Mammary epithelial cell (primary cell): ENCODE measurements at regions of chrX and their contacts with region 1.

Region 1: DNA sequence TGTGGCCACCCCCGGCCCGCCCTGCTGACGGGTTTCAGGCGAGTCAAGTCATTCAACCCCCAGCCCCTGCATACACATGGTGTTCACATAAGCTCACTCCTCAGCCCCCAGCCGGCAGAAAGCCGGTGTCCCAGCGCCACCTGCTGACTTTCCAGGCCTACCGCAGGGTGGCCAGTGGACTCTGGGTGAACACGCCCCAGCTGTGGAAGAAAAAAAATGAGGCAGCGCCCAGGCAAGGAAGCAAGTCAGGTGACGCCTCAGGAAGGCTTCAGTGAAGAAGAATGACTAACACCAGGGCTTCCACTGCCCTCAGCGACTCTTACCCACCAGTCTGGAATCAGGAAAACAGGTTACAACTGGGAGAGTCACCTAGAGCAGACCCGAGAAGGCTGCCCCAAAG is 15.8 kb downstream of the BCAP31 start:
- DNase-seq: peak; percentile 89
- H3K4me3 ChIP-seq: no peak overlapping the region
- H3K27ac ChIP-seq: no peak overlapping the region
- H3K4me1 ChIP-seq: peaks cover 29% of the 10 kb centered on the region
- H3K27me3 ChIP-seq: no peaks in the 10 kb centered on the region
- CTCF ChIP-seq: peak; percentile 45 to 73

Region 2: DNA sequence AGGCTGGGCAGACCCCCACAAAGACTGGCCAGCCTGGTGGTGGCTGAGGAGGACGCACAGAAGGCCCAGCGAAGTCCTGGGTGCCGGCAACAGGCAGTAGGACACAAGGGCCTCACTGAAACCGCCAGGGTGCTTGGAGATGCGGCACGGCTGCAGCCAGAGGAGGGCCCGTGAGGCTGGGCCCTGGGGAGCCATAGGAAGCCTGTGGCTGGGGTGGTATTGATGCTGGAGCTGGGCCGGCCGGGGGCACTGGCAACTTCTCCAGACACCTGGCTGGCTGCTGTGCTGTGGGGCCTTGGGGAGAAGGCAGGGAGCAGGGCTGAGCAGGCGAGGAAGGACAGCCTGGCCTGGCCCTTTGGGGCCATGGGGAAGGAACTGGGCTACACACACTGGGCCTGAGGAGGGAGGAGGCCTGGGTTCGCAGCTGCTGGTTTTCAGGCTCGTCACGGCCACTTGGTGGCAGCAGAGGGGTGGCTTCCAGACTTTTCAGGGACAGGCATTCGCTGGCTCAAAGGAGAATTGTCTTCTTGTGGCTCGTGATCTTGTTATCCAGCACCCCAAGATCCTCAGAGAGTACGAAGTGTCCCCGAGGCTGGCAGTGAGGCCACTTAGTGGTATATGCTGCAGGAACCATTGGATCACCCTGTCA is 153.8 kb before region 1 on chrX:
- CTCF ChIA-PET with region 1: no interaction called
- dilution Hi-C with region 1: no loop called
- in situ Hi-C with region 1: no loop called
- intact Hi-C with region 1: loop called (anchors 5 kb)
- DNase-seq: peak; percentile 27
- H3K4me3 ChIP-seq: no peak overlapping the region
- H3K27ac ChIP-seq: no peak overlapping the region
- H3K4me1 ChIP-seq: no peaks in the 10 kb centered on the region
- H3K27me3 ChIP-seq: peaks cover 3% of the 10 kb centered on the region
- CTCF ChIP-seq: peak; percentile 48 to 72

Region 3: DNA sequence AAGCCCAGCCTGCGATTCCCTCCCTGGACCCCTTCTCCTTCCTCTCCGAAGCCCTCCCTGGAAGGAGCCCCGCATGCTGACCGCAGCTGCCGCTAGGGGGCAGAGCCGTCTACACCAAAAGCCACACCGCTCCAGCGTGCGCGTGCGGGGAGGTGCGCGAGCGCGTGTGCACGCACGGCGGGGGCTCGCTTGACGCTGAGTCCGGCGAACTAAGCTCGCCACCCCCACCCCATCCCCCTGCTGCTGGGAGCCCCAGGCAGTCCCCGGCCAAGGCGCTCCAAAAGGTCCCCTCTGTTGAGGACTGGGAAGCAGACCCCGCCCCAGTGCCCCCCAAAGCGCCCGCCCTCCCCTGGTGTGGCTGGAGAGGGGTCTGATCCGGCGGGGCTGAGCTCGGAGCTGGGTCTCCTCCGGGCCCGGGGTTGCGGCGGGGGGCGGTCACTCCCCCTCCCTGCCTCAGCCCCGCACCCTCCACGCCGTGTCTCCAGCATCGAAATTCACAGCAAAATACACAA is 98.4 kb before region 1 on chrX:
- CTCF ChIA-PET with region 1: no interaction called
- dilution Hi-C with region 1: no loop called
- in situ Hi-C with region 1: no loop called
- intact Hi-C with region 1: loop called (anchors 1 kb)
- DNase-seq: peak; percentile 21
- H3K4me3 ChIP-seq: peak overlapping the region in 1 of 3 experiments; percentile 27
- H3K27ac ChIP-seq: no peak overlapping the region
- H3K4me1 ChIP-seq: peaks cover 4% of the 10 kb centered on the region
- H3K27me3 ChIP-seq: no peaks in the 10 kb centered on the region
- CTCF ChIP-seq: peak; percentile 48 to 75

Region 4: GRCh38 chrX:153649178-153649914 is 59.1 kb before region 1 on chrX:
- CTCF ChIA-PET with region 1: no interaction called
- dilution Hi-C with region 1: no loop called
- in situ Hi-C with region 1: no loop called
- intact Hi-C with region 1: no loop called
- DNase-seq: no peak
- H3K4me3 ChIP-seq: no peak overlapping the region
- H3K27ac ChIP-seq: no peak overlapping the region
- H3K4me1 ChIP-seq: peaks cover 11% of the 10 kb centered on the region
- H3K27me3 ChIP-seq: peaks cover 5% of the 10 kb centered on the region
- CTCF ChIP-seq: peak in 1 of 2 donors; percentile 47

Region 5: DNA sequence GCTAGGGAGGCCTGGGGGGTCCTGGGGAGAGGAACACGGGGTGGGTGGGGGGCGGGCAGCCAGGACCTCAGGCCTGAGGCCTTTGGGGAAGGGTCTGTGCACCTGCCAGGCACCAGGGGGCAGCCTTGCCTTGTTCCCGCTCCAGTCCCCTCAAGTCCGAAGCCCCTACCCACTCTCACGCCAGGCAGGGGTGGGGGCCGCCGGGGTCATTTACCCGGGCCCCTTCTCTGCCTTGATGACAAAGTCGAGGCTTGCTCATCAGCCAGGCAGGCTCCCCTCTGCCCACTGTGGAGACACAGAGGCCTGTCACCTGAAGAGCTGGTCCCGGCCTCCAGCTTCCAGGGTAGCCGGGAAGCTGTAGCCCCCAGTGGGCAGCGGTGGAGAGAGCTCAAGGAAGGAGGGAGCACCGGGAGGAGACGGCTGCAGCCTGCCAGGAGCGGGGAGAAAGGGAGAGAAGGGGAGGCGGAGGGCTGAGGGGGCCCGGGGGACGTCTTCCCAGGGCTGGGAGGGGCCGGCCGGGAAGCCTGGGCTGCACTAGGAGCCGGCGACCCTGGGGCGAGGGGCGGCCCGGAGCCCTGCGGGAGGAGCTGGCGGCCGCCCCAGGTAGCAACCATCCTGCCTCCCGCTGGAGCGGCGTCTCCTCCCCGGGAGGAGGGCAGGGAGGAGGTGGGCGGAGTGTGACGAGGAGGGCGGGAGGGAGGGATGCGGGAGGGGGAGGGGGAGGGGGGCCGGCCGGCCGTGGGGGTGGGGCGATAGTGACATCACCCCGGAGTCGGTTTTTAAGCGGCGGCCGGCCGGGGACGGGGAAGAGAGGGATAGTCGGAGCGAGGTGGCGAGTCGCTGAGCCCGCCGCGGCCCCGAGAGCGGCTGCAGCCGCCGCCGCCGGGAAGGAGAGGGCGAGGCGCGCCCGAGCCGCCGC is 21.0 kb before region 1 on chrX and contains the start of gene SLC6A8:
- CTCF ChIA-PET with region 1: interaction called, 3 read pairs
- dilution Hi-C with region 1: no loop called
- in situ Hi-C with region 1: no loop called
- intact Hi-C with region 1: loop called (anchors 2 kb)
- DNase-seq: peak; percentile 57
- H3K4me3 ChIP-seq: peak within 1 kb of the TSS in 2 of 3 experiments; percentile 56 to 58
- H3K27ac ChIP-seq: no peak within 1 kb of the TSS
- H3K4me1 ChIP-seq: peaks cover 7% of the 10 kb centered on the region
- H3K27me3 ChIP-seq: no peaks in the 10 kb centered on the region
- CTCF ChIP-seq: peak in 1 of 2 donors; percentile 37
- total RNA-seq, gene SLC6A8: 20.5 to 99.2 TPM

Region 6: DNA sequence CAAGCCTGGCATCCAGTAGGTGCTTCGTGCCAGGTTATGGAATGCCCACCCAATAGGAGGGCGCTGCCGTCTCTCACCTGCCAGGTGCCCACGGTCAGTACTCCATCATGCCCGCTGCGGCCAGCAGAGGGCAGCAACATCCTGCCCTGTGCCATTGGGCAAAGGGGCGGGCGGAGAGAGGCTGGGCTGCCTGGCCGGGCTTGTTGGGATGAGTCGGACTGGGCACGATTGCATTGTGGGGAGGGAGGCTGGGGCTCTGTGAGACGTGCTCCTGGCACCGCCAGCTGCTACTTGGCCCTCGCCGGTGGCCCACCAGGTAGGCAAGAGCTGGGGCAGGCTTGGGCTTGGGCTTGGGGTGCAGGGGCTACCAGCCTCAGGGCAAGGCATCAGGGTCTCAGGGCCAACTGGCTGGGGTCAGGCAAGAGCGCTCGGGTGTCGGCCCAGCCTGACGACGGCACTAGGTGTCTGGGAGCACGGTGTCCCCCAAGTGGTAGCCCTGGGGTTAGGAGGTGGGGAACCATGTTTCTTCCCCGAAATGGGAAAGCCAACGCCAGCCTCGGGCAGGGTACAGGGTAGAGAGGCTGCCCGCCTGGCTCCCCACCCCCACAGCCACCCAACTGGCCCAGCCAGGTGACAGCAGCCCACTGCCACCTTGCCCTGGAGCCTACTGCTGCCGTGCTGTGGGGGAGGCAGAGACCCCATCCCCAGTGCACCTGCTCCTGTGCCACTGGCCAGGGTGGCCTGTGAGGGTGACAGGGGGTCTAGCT is 55.8 kb after region 1 on chrX and contains the start of gene PLXNB3:
- CTCF ChIA-PET with region 1: no interaction called
- dilution Hi-C with region 1: no loop called
- in situ Hi-C with region 1: no loop called
- intact Hi-C with region 1: no loop called
- DNase-seq: peak; percentile 76
- H3K4me3 ChIP-seq: peak within 1 kb of the TSS; percentile 25 to 68 (median 66)
- H3K27ac ChIP-seq: no peak within 1 kb of the TSS
- H3K4me1 ChIP-seq: peaks cover 30% of the 10 kb centered on the region
- H3K27me3 ChIP-seq: no peaks in the 10 kb centered on the region
- CTCF ChIP-seq: peak; percentile 72 to 86
- total RNA-seq, gene PLXNB3: 15.2 to 24.6 TPM